OCI-LY7 (cell line): ENCODE measurements at regions of chr15 and their contacts with region 1.

Region 1: DNA sequence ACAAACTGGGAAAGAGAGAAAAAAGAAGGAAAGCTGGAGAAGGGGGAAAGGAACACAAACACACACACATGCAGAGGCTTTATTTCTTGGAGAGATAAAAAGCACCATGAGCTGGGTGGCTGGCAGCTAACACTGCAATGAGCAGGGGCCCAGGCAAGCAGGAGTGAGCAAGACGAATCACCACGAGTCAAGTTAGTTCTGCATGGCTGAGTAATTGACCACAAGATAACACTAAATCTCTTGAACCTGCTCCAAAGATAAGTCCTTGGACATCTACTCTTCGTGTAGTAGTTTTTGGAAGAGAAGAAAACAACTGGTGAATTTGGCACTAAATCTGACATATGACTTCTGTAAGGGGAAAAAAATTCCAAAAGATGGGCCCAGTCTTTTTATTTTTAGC is 100.9 kb downstream of the MYO5A start:
- DNase-seq: no peak
- H3K4me3 ChIP-seq: no peak overlapping the region
- H3K27ac ChIP-seq: no peak overlapping the region
- H3K4me1 ChIP-seq: no peaks in the 10 kb centered on the region
- CTCF ChIP-seq: no peak

Region 2: GRCh38 chr15:52378746-52379394 is 48.9 kb before region 1 on chr15:
- CTCF ChIA-PET with region 1: no interaction called
- POLR2A ChIA-PET with region 1: no interaction called
- intact Hi-C with region 1: no loop called
- DNase-seq: no peak
- H3K4me3 ChIP-seq: no peak overlapping the region
- H3K27ac ChIP-seq: no peak overlapping the region
- H3K4me1 ChIP-seq: no peaks in the 10 kb centered on the region
- CTCF ChIP-seq: no peak

Region 3: DNA sequence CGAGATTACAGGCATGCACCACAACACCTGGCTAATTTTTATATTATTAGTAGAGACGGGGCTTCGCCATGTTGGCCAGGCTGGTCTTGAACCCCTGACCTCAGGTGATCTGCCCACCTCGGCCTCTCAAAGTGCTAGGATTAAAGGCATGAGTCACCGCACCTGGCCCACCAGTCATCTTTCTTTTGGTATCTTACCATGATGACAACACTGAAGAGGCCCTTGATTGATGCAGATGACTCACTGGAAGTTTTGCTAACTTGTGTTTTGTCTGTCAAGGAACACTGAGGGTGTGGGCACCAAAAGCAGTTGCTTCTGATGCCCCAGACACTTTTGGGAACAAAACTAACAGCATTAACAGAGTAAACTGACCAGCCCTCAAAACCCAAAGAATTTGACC is 12.6 kb after region 1 on chr15:
- CTCF ChIA-PET with region 1: no interaction called
- POLR2A ChIA-PET with region 1: interaction called, 11 read pairs
- intact Hi-C with region 1: no loop called
- DNase-seq: no peak
- H3K4me3 ChIP-seq: no peak overlapping the region
- H3K27ac ChIP-seq: no peak overlapping the region
- H3K4me1 ChIP-seq: no peaks in the 10 kb centered on the region
- CTCF ChIP-seq: no peak

Region 4: GRCh38 chr15:52584414-52584813 is 156.6 kb after region 1 on chr15:
- CTCF ChIA-PET with region 1: no interaction called
- POLR2A ChIA-PET with region 1: no interaction called
- intact Hi-C with region 1: no loop called
- DNase-seq: no peak
- H3K4me3 ChIP-seq: no peak overlapping the region
- H3K27ac ChIP-seq: no peak overlapping the region
- H3K4me1 ChIP-seq: no peaks in the 10 kb centered on the region
- CTCF ChIP-seq: no peak